ENCODE measurements at regions of chr7 and their contacts with region 1.

Region 1: DNA sequence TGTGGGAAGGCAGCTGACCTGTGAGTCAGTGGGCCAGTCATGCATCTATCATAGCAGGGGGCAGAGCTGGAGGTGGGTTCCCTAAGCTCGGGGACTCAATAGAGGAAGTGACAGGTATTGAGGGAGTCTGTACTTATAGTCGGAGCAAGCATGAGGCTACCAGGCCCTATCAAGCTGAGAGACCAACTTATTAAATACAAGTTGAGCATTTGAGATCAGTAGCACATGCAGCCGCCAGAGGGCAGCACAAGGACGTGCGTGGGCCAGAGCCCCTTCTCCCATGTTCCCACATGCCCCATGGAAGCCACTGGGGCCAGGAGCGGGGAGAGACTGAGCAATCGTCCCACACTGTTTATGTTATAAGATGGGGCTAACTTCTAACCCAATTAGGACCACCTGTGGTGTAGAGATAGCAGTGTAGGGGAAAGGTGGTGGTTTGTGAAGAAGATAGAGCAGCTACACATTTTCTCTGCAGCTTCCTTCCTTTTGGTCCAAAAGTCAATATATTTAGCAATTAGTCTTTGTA is 13.0 kb upstream of the STK31 start:
- DNase-seq: no peak
- ATAC-seq: peak; percentile 97
- H3K4me3 ChIP-seq: no peak overlapping the region
- H3K27ac ChIP-seq: no peak overlapping the region
- H3K4me1 ChIP-seq: no peaks in the 10 kb centered on the region
- H3K27me3 ChIP-seq: no peaks in the 10 kb centered on the region
- CTCF ChIP-seq: peak; percentile 72 to 89 (median 73)
- EP300 ChIP-seq: no peak
- POLR2A ChIP-seq: no peak
- RAD21 ChIP-seq: peak; percentile 44

Region 2: DNA sequence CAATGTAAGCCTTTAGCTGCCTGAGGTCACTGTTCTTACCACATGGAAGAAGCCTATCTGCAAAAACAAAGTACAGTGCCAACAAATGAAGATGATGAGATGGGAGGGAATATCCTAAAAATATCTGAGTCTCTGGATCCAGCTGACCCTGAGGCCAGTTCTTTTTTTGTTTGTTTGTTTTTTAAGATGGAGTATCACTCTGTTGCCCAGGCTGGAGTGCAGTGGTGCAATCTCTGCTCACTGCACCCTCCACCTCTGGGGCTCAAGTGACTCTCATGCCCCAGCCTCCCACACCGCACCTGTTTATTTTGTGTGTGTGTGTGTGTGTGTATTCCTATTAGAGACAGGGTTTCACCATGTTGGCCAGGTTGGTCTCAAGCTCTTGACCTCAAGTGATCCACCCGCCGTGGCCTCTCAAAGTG is 728.0 kb before region 1 on chr7:
- CTCF ChIA-PET with region 1: no interaction called
- POLR2A ChIA-PET with region 1: no interaction called
- RAD21 ChIA-PET with region 1: no interaction called
- SMC1A ChIA-PET with region 1: no interaction called
- in situ Hi-C with region 1: no loop called
- intact Hi-C with region 1: no loop called
- DNase-seq: no peak
- ATAC-seq: no peak
- H3K4me3 ChIP-seq: no peak overlapping the region
- H3K27ac ChIP-seq: no peak overlapping the region
- H3K4me1 ChIP-seq: no peaks in the 10 kb centered on the region
- H3K27me3 ChIP-seq: no peaks in the 10 kb centered on the region
- CTCF ChIP-seq: no peak
- EP300 ChIP-seq: no peak
- POLR2A ChIP-seq: no peak
- RAD21 ChIP-seq: no peak

Region 3: DNA sequence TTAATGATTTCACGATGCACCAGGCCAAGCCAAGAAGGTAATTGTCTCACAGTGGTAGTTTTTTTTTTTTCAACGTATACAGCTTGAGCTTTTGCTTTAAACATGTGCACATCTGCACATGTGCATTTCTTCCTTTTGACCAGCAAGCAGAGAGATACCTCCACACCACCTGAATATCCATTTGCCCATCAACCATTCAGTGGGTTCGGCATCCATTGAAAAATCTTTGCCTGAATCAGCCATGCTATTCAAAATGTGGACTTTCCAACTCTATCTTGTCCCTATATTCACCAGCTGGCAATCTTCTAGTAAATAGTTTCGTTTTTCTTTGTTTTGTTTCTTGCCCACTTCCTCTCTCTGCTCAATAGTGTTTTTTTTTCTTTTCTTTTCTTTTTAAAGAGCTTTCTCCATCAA is 157.5 kb before region 1 on chr7:
- CTCF ChIA-PET with region 1: interaction called, 16 read pairs
- POLR2A ChIA-PET with region 1: no interaction called
- RAD21 ChIA-PET with region 1: no interaction called
- SMC1A ChIA-PET with region 1: interaction called, 3 read pairs
- in situ Hi-C with region 1: no loop called
- intact Hi-C with region 1: no loop called
- DNase-seq: peak; percentile 62
- ATAC-seq: peak; percentile 80
- H3K4me3 ChIP-seq: no peak overlapping the region
- H3K27ac ChIP-seq: peak overlapping the region; percentile 79
- H3K4me1 ChIP-seq: peaks cover 15% of the 10 kb centered on the region
- H3K27me3 ChIP-seq: no peaks in the 10 kb centered on the region
- CTCF ChIP-seq: no peak
- EP300 ChIP-seq: no peak
- POLR2A ChIP-seq: no peak
- RAD21 ChIP-seq: no peak

Region 4: GRCh38 chr7:23617482-23617881 is 79.5 kb before region 1 on chr7:
- CTCF ChIA-PET with region 1: no interaction called
- POLR2A ChIA-PET with region 1: interaction called, 10 read pairs
- RAD21 ChIA-PET with region 1: no interaction called
- SMC1A ChIA-PET with region 1: no interaction called
- in situ Hi-C with region 1: no loop called
- intact Hi-C with region 1: no loop called
- DNase-seq: no peak
- ATAC-seq: peak; percentile 68
- H3K4me3 ChIP-seq: no peak overlapping the region
- H3K27ac ChIP-seq: no peak overlapping the region
- H3K4me1 ChIP-seq: no peaks in the 10 kb centered on the region
- H3K27me3 ChIP-seq: no peaks in the 10 kb centered on the region
- CTCF ChIP-seq: no peak
- EP300 ChIP-seq: no peak
- POLR2A ChIP-seq: no peak
- RAD21 ChIP-seq: no peak

Region 5: DNA sequence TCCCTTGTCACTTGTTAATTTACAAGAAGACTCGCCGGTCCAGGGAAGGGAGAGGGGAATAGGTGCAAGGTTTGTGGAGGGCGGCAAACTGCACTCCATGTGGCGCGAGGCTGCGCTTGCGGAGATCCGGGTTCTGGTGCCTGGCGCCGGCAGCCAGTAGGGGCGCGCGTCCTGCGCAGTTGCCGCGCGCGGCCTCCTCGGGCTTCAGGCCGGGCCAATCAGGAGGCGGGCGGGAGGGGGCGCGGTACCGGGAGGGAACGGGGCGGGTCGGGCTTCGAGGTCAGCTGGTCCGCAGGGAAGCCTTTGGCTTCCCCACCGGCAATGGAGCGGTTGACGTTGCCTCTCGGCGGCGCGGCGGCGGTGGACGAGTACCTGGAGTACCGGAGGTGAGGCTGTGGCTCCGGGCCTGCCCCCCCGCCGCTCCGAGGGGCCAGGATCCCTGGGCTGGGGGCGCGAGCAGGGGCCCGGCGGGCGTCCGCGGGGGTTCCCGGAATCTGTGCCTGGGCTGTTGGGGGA is 17.0 kb before region 1 on chr7 and contains the start of gene FAM221A:
- CTCF ChIA-PET with region 1: interaction called, 123 read pairs
- POLR2A ChIA-PET with region 1: no interaction called
- RAD21 ChIA-PET with region 1: interaction called, 7 read pairs
- SMC1A ChIA-PET with region 1: interaction called, 16 read pairs
- in situ Hi-C with region 1: no loop called
- intact Hi-C with region 1: no loop called
- DNase-seq: peak; percentile 36
- ATAC-seq: peak; percentile 98
- H3K4me3 ChIP-seq: peak within 1 kb of the TSS; percentile 84
- H3K27ac ChIP-seq: peak within 1 kb of the TSS; percentile 22
- H3K4me1 ChIP-seq: no peaks in the 10 kb centered on the region; the same call in 1 of the 2 replicates
- H3K27me3 ChIP-seq: no peaks in the 10 kb centered on the region
- CTCF ChIP-seq: peak; percentile 65 to 85 (median 70)
- EP300 ChIP-seq: no peak
- POLR2A ChIP-seq: peak; percentile 58
- RAD21 ChIP-seq: no peak
- polyA plus RNA-seq, gene FAM221A: 9.8 to 16.7 TPM

Region 6: GRCh38 chr7:23712368-23713284 is 15.6 kb after region 1 on chr7:
- CTCF ChIA-PET with region 1: interaction called, 148 read pairs
- POLR2A ChIA-PET with region 1: interaction called, 5 read pairs
- RAD21 ChIA-PET with region 1: interaction called, 20 read pairs
- SMC1A ChIA-PET with region 1: interaction called, 57 read pairs
- in situ Hi-C with region 1: no loop called
- intact Hi-C with region 1: no loop called
- DNase-seq: peak; percentile 3
- ATAC-seq: peak; percentile 62
- H3K4me3 ChIP-seq: no peak overlapping the region
- H3K27ac ChIP-seq: no peak overlapping the region
- H3K4me1 ChIP-seq: no peaks in the 10 kb centered on the region
- H3K27me3 ChIP-seq: no peaks in the 10 kb centered on the region
- CTCF ChIP-seq: peak; percentile 22 to 70 (median 27); a peak in 4 of 6 replicates
- EP300 ChIP-seq: no peak
- POLR2A ChIP-seq: no peak
- RAD21 ChIP-seq: peak; percentile 98

Measured in GM12878 (cell line).